OCI-LY7 (cell line): ENCODE measurements at regions of chr7 and their contacts with region 1.

Region 1: GRCh38 chr7:81956520-81956919 is 186.7 kb upstream of the HGF start:
- DNase-seq: peak; percentile 63
- H3K4me3 ChIP-seq: no peak overlapping the region
- H3K27ac ChIP-seq: no peak overlapping the region
- H3K4me1 ChIP-seq: no peaks in the 10 kb centered on the region
- CTCF ChIP-seq: peak; percentile 88

Region 2: GRCh38 chr7:81482600-81483186 is 473.8 kb before region 1 on chr7:
- CTCF ChIA-PET with region 1: no interaction called
- POLR2A ChIA-PET with region 1: no interaction called
- intact Hi-C with region 1: loop called (anchors 5 kb)
- DNase-seq: peak; percentile 34
- H3K4me3 ChIP-seq: no peak overlapping the region
- H3K27ac ChIP-seq: no peak overlapping the region
- H3K4me1 ChIP-seq: no peaks in the 10 kb centered on the region
- CTCF ChIP-seq: peak; percentile 81

Region 3: GRCh38 chr7:81659697-81660395 is 296.7 kb before region 1 on chr7:
- CTCF ChIA-PET with region 1: no interaction called
- POLR2A ChIA-PET with region 1: no interaction called
- intact Hi-C with region 1: loop called (anchors 10 kb)
- DNase-seq: no peak
- H3K4me3 ChIP-seq: no peak overlapping the region
- H3K27ac ChIP-seq: no peak overlapping the region
- H3K4me1 ChIP-seq: no peaks in the 10 kb centered on the region
- CTCF ChIP-seq: no peak

Region 4: GRCh38 chr7:81873559-81873958 is 83.0 kb before region 1 on chr7:
- CTCF ChIA-PET with region 1: no interaction called
- POLR2A ChIA-PET with region 1: no interaction called
- intact Hi-C with region 1: no loop called
- DNase-seq: no peak
- H3K4me3 ChIP-seq: no peak overlapping the region
- H3K27ac ChIP-seq: no peak overlapping the region
- H3K4me1 ChIP-seq: peaks cover 14% of the 10 kb centered on the region
- CTCF ChIP-seq: no peak